ENCODE measurements at regions of chr15 and their contacts with region 1.

Region 1: DNA sequence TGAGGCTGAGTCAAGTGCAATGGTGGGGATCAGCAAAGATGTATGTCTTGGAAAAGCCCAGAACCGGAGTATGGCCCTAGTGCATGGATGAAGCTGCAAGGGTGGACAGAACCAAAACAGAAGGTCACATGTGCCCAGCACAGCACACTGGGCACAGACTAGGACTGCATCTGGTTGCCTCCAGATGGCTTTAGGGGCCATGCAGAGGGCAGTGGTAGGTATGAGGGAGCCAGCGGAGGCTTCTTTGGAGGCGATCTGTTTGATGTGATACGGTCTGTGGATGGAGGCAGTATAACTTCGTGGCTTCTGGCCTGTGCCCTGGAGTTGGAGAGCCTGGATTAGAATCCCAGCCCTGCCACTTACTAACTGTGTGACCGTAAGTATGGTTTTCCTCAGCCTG is 29.4 kb downstream of the SV2B start:
- DNase-seq: no peak
- H3K4me3 Mint-ChIP-seq: no peak overlapping the region
- H3K27ac Mint-ChIP-seq: no peak overlapping the region
- H3K4me1 Mint-ChIP-seq: no peaks in the 10 kb centered on the region
- H3K27me3 Mint-ChIP-seq: peaks cover 16% of the 10 kb centered on the region

Region 2: DNA sequence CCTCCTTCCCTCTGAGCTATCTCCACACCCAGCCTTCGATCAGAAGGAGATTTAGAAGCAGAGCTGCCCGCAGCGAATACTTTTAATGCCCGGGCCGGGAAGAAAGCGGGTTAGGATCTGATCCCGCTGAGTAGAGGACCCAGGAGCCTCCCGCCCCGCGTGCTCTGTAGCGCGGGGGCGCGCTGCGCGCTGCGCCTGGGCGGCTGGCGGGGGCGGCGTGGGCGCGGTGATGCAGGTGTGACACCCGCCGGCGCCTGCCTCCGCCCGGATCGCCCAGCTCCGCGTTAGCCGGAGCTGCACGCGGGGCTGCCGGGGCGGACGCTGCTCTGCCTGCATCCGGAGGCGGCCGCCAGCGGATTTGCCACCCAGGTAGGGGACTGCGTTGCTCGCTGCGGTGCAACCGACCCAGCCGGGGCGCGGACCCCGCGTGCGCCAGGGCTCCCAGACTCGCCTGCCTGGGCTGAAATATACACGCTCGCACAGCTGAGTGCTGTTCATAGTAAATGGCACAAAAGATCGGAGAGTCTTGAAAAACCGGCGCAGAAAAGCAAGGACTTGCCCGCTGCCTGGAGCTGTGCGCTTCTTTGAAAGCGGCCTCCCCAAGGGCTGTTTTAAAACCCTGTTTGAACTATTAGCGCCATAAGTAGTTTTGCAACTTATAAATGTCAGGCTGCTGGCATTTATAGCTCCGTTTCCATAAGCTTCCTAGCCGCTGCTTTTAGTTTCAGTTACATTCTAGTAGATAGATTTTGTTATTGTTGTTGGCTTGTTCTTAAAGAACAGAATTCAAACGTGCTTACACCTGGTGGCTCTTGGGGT is 29.2 kb before region 1 on chr15 and contains the start of gene SV2B:
- CTCF ChIA-PET with region 1: no interaction called
- intact Hi-C with region 1: loop called (anchors 1 kb)
- DNase-seq: peak; percentile 65
- H3K4me3 Mint-ChIP-seq: peak within 1 kb of the TSS; percentile 73
- H3K27ac Mint-ChIP-seq: no peak within 1 kb of the TSS
- H3K4me1 Mint-ChIP-seq: peaks cover 14% of the 10 kb centered on the region
- H3K27me3 Mint-ChIP-seq: peaks cover 65% of the 10 kb centered on the region
- total RNA-seq, gene SV2B: 0.07 TPM

Region 3: DNA sequence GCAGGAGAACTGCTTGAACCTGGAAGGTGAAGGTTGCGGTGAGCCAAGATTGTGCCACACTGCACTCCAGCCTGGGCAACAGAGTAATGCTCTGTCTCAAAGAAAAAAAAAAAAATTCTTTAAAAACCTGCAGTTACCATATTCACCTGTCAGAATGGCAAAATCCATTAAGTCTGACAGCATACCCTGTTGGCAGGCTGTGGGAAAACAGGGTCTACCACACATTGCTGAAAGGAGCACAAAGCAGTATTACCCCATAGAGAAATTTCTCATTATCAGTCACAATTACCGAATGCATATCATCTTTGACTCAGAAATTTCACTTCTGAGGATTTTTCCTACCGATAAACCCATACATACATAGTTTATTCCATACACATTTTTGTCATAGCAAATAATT is 459.9 kb after region 1 on chr15:
- CTCF ChIA-PET with region 1: no interaction called
- intact Hi-C with region 1: no loop called
- DNase-seq: peak; percentile 18
- H3K4me3 Mint-ChIP-seq: no peak overlapping the region
- H3K27ac Mint-ChIP-seq: no peak overlapping the region
- H3K4me1 Mint-ChIP-seq: peaks cover 4% of the 10 kb centered on the region
- H3K27me3 Mint-ChIP-seq: no peaks in the 10 kb centered on the region

Region 4: DNA sequence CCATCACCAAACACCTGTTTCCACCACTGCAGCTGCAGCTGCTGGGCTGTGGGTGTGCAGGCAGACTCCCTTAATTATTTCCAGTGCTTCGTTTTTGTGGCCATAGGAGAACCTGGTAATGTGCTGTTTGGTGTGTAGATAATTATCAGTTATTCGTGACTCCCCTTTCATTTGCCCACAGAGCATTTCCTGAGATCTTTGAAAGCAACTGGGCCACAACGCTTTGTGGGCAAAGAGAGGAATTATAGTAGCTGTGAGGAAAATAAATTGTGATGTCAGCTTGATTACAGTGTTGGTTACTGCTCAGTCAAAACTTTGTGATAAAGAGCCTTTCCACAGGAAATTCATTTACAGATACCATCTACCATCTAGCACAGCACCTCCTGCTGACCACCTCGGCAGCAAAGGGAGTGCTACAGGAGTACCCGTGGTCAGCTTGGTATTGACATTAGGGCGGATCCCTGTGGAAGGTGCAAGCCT is 530.8 kb after region 1 on chr15:
- CTCF ChIA-PET with region 1: no interaction called
- intact Hi-C with region 1: no loop called
- DNase-seq: no peak
- H3K4me3 Mint-ChIP-seq: no peak overlapping the region
- H3K27ac Mint-ChIP-seq: no peak overlapping the region
- H3K4me1 Mint-ChIP-seq: peaks cover 9% of the 10 kb centered on the region
- H3K27me3 Mint-ChIP-seq: peaks cover 20% of the 10 kb centered on the region

Measured in activated naive CD4-positive, alpha-beta T cell treated with anti-CD3 and anti-CD28 coated beads for 36 hours (primary cell).